ENCODE measurements at regions of chr16 and their contacts with region 1.

Region 1: DNA sequence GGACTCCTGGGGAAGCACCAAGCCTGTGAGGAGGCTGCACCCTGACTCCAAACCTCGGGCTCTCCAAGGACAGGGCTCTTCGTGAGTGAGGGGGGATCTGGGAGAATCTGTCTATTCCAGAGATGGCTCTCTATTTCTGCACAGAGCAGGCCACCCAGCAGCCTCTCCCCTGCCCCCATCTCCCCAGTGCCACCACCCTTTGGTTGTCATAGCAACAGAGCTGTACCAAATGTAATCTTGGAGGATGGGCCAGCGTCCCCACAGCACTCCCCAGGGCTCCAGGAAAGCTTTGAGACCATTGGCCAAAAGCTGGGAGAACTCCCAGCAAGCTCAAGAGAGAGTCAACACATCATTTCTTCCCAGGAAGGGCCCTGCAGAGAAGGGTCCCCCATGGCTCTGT is 49.3 kb downstream of the ABCC12 start:
- DNase-seq: no peak
- H3K4me3 ChIP-seq: no peak overlapping the region
- CTCF ChIP-seq: no peak
- POLR2A ChIP-seq: no peak

Region 2: GRCh38 chr16:47851146-47851545 is 255.3 kb before region 1 on chr16:
- intact Hi-C with region 1: loop called (anchors 5 kb)
- DNase-seq: no peak
- H3K4me3 ChIP-seq: no peak overlapping the region
- CTCF ChIP-seq: no peak
- POLR2A ChIP-seq: no peak

Region 3: GRCh38 chr16:48206594-48207242 is 100.3 kb after region 1 on chr16:
- intact Hi-C with region 1: no loop called
- DNase-seq: no peak
- H3K4me3 ChIP-seq: no peak overlapping the region
- CTCF ChIP-seq: no peak
- POLR2A ChIP-seq: no peak

Region 4: GRCh38 chr16:48393485-48394354 is 287.3 kb after region 1 on chr16:
- intact Hi-C with region 1: no loop called
- DNase-seq: peak; percentile 70 to 87
- H3K4me3 ChIP-seq: no peak overlapping the region
- CTCF ChIP-seq: no peak
- POLR2A ChIP-seq: no peak

Measured in lower leg skin (tissue), 4 donors.